ENCODE measurements at regions of chr16 and their contacts with region 1.

Region 1: DNA sequence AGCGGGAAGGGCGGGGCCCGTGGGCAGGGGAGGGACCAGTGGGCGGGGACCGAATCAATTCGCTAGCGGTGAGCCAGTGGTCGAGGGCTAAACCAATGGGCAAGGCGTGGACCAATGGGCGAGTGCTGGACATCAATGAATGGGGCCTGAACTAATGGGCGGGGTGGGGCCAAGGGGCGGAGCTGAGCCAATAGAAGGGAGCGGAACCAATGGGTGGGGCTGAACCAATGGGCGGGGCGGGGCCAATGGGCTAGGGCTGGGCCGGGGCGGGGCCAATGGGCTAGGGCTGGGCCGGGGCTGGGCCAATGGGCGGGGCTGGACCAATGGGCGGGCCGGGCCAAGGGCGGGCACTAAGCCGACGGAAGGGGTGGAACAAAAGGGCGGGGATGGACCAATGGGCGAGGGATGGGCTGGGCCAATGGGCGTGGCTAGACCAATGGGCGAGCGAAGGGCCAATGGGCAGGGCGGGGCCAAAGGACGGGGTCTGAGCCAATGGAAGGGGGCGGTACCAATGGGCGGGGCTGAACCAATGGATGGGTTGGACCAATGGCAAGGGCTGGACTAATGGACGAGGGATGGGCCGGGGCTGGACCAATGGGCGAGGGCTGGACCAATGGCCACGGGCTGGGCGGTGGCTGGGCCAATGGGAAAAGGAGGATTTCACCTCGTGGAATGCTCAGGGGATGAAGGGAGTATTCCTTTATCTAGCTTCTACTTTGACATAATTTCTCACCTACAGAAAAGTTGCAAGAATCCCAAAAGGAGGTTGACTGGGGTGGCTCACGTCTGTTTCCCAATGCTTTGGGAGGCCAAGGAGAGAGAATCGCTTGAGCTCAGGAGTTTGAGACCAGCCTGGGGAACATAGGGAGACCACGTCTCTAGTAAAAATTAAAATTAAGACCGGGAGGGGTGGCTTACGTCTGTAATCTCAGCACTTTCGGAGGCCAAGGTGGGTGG is 6.0 kb upstream of the FLYWCH1 start:
- DNase-seq: peak; percentile 99
- H3K4me3 Mint-ChIP-seq: peak overlapping the region; percentile 90
- H3K27ac Mint-ChIP-seq: no peak overlapping the region
- H3K4me1 Mint-ChIP-seq: peaks cover 18% of the 10 kb centered on the region
- H3K27me3 Mint-ChIP-seq: no peaks in the 10 kb centered on the region

Region 2: GRCh38 chr16:2838928-2839327 is 66.8 kb before region 1 on chr16:
- CTCF ChIA-PET with region 1: interaction called, 10 read pairs
- intact Hi-C with region 1: loop called (anchors 1 kb)
- DNase-seq: peak; percentile 73
- H3K4me3 Mint-ChIP-seq: no peak overlapping the region
- H3K27ac Mint-ChIP-seq: no peak overlapping the region
- H3K4me1 Mint-ChIP-seq: peaks cover 32% of the 10 kb centered on the region
- H3K27me3 Mint-ChIP-seq: peaks cover 3% of the 10 kb centered on the region

Region 3: GRCh38 chr16:2882460-2883026 is 23.2 kb before region 1 on chr16:
- CTCF ChIA-PET with region 1: interaction called, 5 read pairs
- intact Hi-C with region 1: loop called (anchors 1 kb)
- DNase-seq: peak; percentile 98
- H3K4me3 Mint-ChIP-seq: peak overlapping the region; percentile 89
- H3K27ac Mint-ChIP-seq: peak overlapping the region; percentile 91
- H3K4me1 Mint-ChIP-seq: peaks cover 14% of the 10 kb centered on the region
- H3K27me3 Mint-ChIP-seq: no peaks in the 10 kb centered on the region

Region 4: GRCh38 chr16:2926650-2927646 is 21.2 kb after region 1 on chr16:
- CTCF ChIA-PET with region 1: interaction called, 9 read pairs
- intact Hi-C with region 1: loop called (anchors 1 kb)
- DNase-seq: peak; percentile 95
- H3K4me3 Mint-ChIP-seq: no peak overlapping the region
- H3K27ac Mint-ChIP-seq: no peak overlapping the region
- H3K4me1 Mint-ChIP-seq: peaks cover 9% of the 10 kb centered on the region
- H3K27me3 Mint-ChIP-seq: no peaks in the 10 kb centered on the region

Region 5: DNA sequence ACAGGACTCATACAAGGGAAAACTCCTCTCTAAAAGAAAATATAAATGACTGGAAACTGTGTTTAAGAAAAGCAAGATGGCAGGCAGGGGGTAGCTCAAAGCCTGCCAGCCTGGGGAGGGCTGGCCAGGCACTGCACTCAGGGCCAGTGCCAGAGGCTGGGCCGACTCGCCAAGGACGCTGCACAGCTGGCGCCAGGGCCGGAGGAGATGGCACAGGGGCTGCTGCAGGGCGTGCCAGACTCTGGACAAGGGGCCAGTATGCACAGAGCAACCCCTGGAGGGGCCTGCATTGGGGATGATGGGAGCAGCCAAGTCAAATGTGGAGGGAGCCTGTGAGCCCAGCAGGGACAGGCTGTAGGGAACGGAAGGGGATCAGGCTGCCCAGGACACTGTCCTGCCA is 70.5 kb after region 1 on chr16:
- CTCF ChIA-PET with region 1: no interaction called
- intact Hi-C with region 1: no loop called
- DNase-seq: no peak
- H3K4me3 Mint-ChIP-seq: no peak overlapping the region
- H3K27ac Mint-ChIP-seq: no peak overlapping the region
- H3K4me1 Mint-ChIP-seq: peaks cover 11% of the 10 kb centered on the region
- H3K27me3 Mint-ChIP-seq: peaks cover under 1% of the 10 kb centered on the region